MCF 10A (cell line): ENCODE measurements at regions of chr12 and their contacts with region 1.

Region 1: GRCh38 chr12:27332407-27333301 is at the start of gene BMAL2:
- DNase-seq: peak; percentile 36
- H3K4me3 Mint-ChIP-seq: peak within 1 kb of the TSS; percentile 86
- H3K27ac Mint-ChIP-seq: peak within 1 kb of the TSS; percentile 98
- H3K4me1 Mint-ChIP-seq: peaks cover 47% of the 10 kb centered on the region
- H3K27me3 Mint-ChIP-seq: no peaks in the 10 kb centered on the region
- CTCF ChIP-seq: no peak
- total RNA-seq, gene BMAL2: 18.0 and 20.0 TPM in 2 replicates

Region 2: DNA sequence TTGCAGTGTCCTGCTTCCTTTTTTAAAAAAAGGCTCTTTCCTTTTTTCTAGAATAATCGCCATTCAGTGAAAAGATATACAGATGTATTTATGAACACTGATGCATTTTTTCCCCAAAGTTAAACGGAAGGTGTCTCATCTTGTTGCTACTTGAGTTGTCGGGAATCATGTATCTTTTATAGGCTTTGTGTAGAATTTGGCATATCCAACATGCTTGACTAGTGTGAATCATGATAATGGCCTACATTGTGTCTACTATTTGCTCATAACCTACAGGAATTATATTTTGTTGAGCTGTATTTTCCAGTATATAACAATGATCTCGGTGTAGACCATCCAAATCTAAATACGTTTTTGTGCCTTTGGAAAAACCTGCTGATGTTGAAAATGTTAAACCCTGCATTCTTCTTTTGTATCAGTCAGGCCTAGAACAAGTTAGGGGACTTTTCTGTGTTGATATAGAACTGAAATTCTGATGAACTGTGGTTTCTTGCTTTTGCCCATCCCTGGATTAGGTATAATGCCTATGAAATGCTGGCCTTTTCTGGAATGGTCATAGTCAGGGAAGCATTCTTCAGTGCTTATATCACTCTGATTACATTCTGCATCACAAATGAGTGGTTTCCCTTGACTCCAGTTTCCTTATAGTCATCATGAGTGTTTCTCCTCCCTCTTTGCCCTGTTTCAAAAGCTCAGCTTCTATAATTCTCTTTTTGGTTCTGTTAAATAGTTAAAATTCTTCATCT is 10.8 kb after region 1 on chr12:
- CTCF ChIA-PET with region 1: interaction called, 7 read pairs
- POLR2A ChIA-PET with region 1: interaction called, 54 read pairs
- intact Hi-C with region 1: no loop called
- DNase-seq: peak; percentile 58
- H3K4me3 Mint-ChIP-seq: peak overlapping the region; percentile 1
- H3K27ac Mint-ChIP-seq: peak overlapping the region; percentile 63
- H3K4me1 Mint-ChIP-seq: peaks cover 29% of the 10 kb centered on the region
- H3K27me3 Mint-ChIP-seq: no peaks in the 10 kb centered on the region
- CTCF ChIP-seq: no peak